OCI-LY7 (cell line): ENCODE measurements at regions of chr17 and their contacts with region 1.

Region 1: DNA sequence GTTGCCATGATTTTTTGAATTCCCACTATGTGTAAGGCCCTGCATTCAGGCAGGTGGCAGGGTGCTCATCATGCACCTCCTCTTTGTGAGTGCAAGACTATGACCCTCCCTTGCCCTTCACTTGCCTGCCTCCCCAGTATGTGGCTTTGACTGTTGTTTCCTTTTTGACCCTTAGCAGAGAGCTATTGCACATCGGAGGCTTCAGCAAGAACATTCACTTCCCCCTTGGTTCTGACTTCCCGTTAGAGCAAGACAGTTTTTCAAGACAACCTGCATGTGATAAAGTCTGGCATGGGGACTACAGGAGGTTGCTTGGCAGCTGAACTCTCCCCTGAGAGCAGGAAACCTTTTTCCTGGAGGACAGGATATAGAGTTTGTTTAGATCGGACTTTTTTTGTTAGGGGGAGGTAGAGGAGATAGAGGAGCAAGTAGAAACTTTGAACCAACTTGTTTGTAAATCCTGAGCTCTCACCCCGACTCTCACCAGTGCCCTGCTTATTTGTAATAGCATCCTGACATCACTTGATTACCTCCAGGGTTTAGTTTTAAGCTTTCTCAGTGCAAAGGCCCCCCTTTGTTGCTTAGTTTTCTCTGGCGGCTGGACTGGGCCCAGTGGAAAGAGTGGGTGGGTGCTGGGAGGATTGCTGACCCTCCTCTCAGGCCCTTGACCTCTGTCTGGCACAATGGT is 34.3 kb downstream of the LIMD2 start:
- DNase-seq: peak; percentile 48
- H3K4me3 ChIP-seq: no peak overlapping the region
- H3K27ac ChIP-seq: no peak overlapping the region
- H3K4me1 ChIP-seq: peaks cover 17% of the 10 kb centered on the region
- CTCF ChIP-seq: no peak

Region 2: GRCh38 chr17:63621766-63622519 is 43.7 kb before region 1 on chr17 and contains the start of gene MAP3K3:
- CTCF ChIA-PET with region 1: no interaction called
- POLR2A ChIA-PET with region 1: interaction called, 11 read pairs
- intact Hi-C with region 1: no loop called
- DNase-seq: peak; percentile 100
- H3K4me3 ChIP-seq: peak within 1 kb of the TSS; percentile 75
- H3K27ac ChIP-seq: peak within 1 kb of the TSS; percentile 43
- H3K4me1 ChIP-seq: peaks cover 26% of the 10 kb centered on the region
- CTCF ChIP-seq: peak; percentile 52; the same call in 1 of the 2 replicates
- total RNA-seq, gene MAP3K3: 16.5 and 26.0 TPM in 2 replicates

Region 3: GRCh38 chr17:63675607-63676413 is 10.1 kb after region 1 on chr17:
- CTCF ChIA-PET with region 1: no interaction called
- POLR2A ChIA-PET with region 1: interaction called, 14 read pairs
- intact Hi-C with region 1: no loop called
- DNase-seq: no peak
- H3K4me3 ChIP-seq: no peak overlapping the region
- H3K27ac ChIP-seq: no peak overlapping the region
- H3K4me1 ChIP-seq: no peaks in the 10 kb centered on the region
- CTCF ChIP-seq: no peak

Region 4: GRCh38 chr17:63774969-63775265 is 109.2 kb after region 1 on chr17:
- CTCF ChIA-PET with region 1: no interaction called
- POLR2A ChIA-PET with region 1: no interaction called
- intact Hi-C with region 1: no loop called
- DNase-seq: peak; percentile 49
- H3K4me3 ChIP-seq: peak overlapping the region; percentile 90
- H3K27ac ChIP-seq: peak overlapping the region; percentile 93
- H3K4me1 ChIP-seq: peaks cover 31% of the 10 kb centered on the region
- CTCF ChIP-seq: no peak